Heart right ventricle (tissue), 16 donors: ENCODE measurements at regions of chr11 and their contacts with region 1.

Region 1: GRCh38 chr11:6757373-6757967 is 14.3 kb downstream of the OR2AG2 start:
- DNase-seq: peak; percentile 11 to 53
- ATAC-seq: peak in 7 of 8 donors; percentile 64 to 89 (median 81)
- H3K4me3 ChIP-seq: no peak overlapping the region
- H3K27ac ChIP-seq: no peak overlapping the region
- H3K4me1 ChIP-seq: no peaks in the 10 kb centered on the region
- H3K27me3 ChIP-seq: no peaks in the 10 kb centered on the region
- CTCF ChIP-seq: peak in 8 of 9 donors; percentile 29 to 83 (median 70)

Region 2: DNA sequence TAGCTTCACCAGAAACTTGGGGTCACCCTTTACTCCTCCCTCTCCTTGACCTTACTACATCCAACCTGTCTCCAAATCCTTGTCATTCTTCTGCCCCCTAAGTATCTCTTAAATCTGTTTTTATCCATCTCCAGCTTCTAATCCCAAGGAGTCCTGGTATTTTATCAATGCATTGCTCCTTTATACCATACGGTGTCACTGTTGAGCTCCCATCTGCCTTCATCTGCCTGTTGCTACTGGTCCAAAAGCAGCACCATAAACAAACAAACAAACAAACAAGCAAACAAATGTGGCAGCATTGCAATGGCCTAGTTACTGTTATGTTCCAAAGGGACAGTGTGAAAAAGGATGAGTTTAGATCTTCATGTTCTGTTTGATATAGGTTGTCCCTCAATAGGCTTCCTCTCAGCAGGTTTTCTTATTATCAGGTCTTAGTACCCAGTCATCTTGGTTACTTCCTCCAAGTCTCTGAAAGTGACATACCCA is 226.2 kb before region 1 on chr11:
- intact Hi-C with region 1: loop called in 4 of 10 experiments (anchors 2 to 5 kb)
- DNase-seq: peak in 1 of 2 donors; percentile 38
- ATAC-seq: peak in 5 of 8 donors; percentile 47 to 75 (median 67)
- H3K4me3 ChIP-seq: no peak overlapping the region
- H3K27ac ChIP-seq: no peak overlapping the region
- H3K4me1 ChIP-seq: no peaks in the 10 kb centered on the region
- H3K27me3 ChIP-seq: no peaks in the 10 kb centered on the region
- CTCF ChIP-seq: peak; percentile 55 to 88 (median 79)

Region 3: DNA sequence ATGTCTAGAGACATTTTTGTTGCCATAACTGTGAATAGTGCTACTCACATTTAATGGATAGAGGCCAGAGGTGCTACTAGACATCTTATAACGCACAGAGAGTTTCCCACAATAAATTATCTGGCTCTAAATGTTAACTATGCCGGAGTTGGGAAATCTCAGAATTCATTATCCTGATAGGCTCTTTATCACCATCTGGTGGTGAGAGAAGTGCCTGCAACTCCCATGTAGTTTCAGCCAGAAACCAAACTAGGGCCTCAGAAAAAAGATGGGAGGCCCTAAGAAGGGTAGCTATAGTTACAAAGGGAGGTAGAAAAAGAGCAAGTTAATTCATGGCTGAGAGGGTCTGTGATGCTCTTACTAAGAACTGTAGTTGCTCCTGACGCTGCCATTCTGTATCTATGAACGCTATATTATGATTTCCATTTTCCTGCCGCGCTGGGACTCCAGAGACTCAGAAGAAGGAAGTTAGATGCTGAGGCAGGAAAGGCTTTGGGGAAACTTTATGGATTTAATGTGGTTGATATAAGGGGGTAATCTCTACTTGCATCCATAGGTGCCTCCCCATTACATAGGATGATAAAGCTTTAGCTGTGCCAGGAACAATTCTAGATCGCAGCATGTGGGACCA is 51.5 kb before region 1 on chr11:
- intact Hi-C with region 1: loop called in 8 of 10 experiments (anchors 2 to 10 kb)
- DNase-seq: peak in 1 of 2 donors; percentile 56
- ATAC-seq: peak in 7 of 8 donors; percentile 30 to 73 (median 56)
- H3K4me3 ChIP-seq: no peak overlapping the region
- H3K27ac ChIP-seq: peak overlapping the region in 8 of 10 donors; percentile 3 to 66 (median 36)
- H3K4me1 ChIP-seq: peaks cover 0 to 36% (median 23%) of the 10 kb centered on the region in 9 donors
- H3K27me3 ChIP-seq: no peaks in the 10 kb centered on the region
- CTCF ChIP-seq: peak; percentile 87 to 98 (median 94)

Region 4: DNA sequence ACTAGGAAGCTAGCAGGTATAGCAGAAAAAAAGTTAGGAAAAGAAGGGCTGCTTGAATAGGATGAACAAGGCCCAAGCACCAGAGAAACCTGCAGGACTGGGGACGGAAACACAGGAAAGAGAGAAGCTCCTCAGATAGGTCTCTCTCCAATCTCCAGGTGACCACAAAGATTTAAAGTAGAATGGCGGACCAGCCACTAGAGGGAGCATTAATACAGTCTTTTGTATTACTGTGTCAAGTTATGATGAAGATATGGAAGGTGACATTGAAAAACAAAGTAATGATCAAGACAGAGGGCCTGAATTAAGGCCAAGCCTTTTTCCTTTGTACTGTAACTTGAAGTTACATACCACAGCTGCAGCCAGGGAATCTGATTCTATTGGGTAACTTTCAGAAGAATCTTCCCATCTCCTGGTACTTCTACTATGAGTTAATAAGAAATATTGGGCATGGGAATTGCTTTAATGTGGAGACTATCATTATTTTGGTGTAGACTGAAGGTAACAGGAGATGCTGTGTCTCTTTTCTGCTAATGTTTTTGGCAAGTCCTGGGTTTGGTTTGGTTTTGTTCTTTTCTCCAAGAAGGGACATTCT is 19.5 kb before region 1 on chr11:
- intact Hi-C with region 1: loop called in 4 of 10 experiments (anchors 1 to 2 kb)
- DNase-seq: peak in 1 of 2 donors; percentile 51
- ATAC-seq: peak in 4 of 8 donors; percentile 39 to 79 (median 57)
- H3K4me3 ChIP-seq: no peak overlapping the region
- H3K27ac ChIP-seq: no peak overlapping the region
- H3K4me1 ChIP-seq: peaks cover 0 to 69% (median 0%) of the 10 kb centered on the region in 9 donors
- H3K27me3 ChIP-seq: no peaks in the 10 kb centered on the region
- CTCF ChIP-seq: peak; percentile 42 to 77 (median 70)

Region 5: DNA sequence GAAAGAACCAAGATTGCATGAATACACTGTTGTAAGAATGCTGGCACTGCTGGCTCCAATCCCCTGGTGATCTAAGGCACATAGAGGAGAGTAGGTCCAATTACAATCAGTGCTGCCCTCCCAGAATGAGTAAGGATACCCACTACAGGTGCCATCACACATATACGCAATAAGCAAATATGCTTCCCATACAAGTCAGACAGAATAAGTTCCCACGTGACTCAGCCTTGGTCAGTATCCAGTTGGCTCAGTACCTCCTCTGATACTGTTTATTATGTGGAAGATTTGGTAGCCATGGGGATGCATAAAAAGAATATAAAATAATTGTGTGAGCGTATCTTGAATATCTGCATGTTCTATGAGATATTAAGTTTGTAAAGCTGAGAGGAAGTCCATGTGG is 154.5 kb after region 1 on chr11:
- intact Hi-C with region 1: no loop called
- DNase-seq: no peak
- ATAC-seq: peak in 1 of 8 donors; percentile 19
- H3K4me3 ChIP-seq: no peak overlapping the region
- H3K27ac ChIP-seq: no peak overlapping the region
- H3K4me1 ChIP-seq: no peaks in the 10 kb centered on the region
- H3K27me3 ChIP-seq: no peaks in the 10 kb centered on the region
- CTCF ChIP-seq: no peak

Region 6: GRCh38 chr11:6927030-6927617 is 169.7 kb after region 1 on chr11:
- intact Hi-C with region 1: no loop called
- DNase-seq: no peak
- ATAC-seq: peak in 2 of 8 donors; percentile 22 to 31
- H3K4me3 ChIP-seq: peak overlapping the region; percentile 16 to 66 (median 60)
- H3K27ac ChIP-seq: peak overlapping the region in 1 of 10 donors; percentile 62
- H3K4me1 ChIP-seq: peaks cover 0 to 17% (median 9%) of the 10 kb centered on the region in 9 donors
- H3K27me3 ChIP-seq: peaks cover 0 to 27% (median 22%) of the 10 kb centered on the region in 7 donors
- CTCF ChIP-seq: no peak